ENCODE measurements at regions of chr15 and their contacts with region 1.

Region 1: GRCh38 chr15:67080900-67081431 is 15.6 kb downstream of the SMAD3 start:
- DNase-seq: peak; percentile 96
- ATAC-seq: peak; percentile 71
- H3K4me3 ChIP-seq: peak overlapping the region in 4 of 5 experiments; percentile 18 to 63 (median 30)
- H3K4me3 Mint-ChIP-seq: peak overlapping the region; percentile 87
- H3K27ac ChIP-seq: peak overlapping the region; percentile 92 to 97
- H3K27ac Mint-ChIP-seq: peak overlapping the region; percentile 97
- H3K4me1 ChIP-seq: peaks cover 96 to 100% of the 10 kb centered on the region in 2 donors
- H3K4me1 Mint-ChIP-seq: peaks cover 97% of the 10 kb centered on the region
- H3K27me3 ChIP-seq: no peaks in the 10 kb centered on the region
- H3K27me3 Mint-ChIP-seq: no peaks in the 10 kb centered on the region
- CTCF ChIP-seq: peak; percentile 61

Region 2: GRCh38 chr15:66862878-66863335 is 218.1 kb before region 1 on chr15:
- CTCF ChIA-PET with region 1: no interaction called
- POLR2A ChIA-PET with region 1: no interaction called
- intact Hi-C with region 1: loop called (anchors 10 kb)
- DNase-seq: peak; percentile 91
- ATAC-seq: peak; percentile 61
- H3K4me3 ChIP-seq: no peak overlapping the region
- H3K4me3 Mint-ChIP-seq: no peak overlapping the region
- H3K27ac ChIP-seq: peak overlapping the region; percentile 51 to 61
- H3K27ac Mint-ChIP-seq: peak overlapping the region; percentile 63
- H3K4me1 ChIP-seq: peaks cover 33 to 47% of the 10 kb centered on the region in 2 donors
- H3K4me1 Mint-ChIP-seq: peaks cover 49% of the 10 kb centered on the region
- H3K27me3 ChIP-seq: peaks cover 0 to 3% (median 0%) of the 10 kb centered on the region in 4 experiments
- H3K27me3 Mint-ChIP-seq: no peaks in the 10 kb centered on the region
- CTCF ChIP-seq: peak; percentile 89

Region 3: DNA sequence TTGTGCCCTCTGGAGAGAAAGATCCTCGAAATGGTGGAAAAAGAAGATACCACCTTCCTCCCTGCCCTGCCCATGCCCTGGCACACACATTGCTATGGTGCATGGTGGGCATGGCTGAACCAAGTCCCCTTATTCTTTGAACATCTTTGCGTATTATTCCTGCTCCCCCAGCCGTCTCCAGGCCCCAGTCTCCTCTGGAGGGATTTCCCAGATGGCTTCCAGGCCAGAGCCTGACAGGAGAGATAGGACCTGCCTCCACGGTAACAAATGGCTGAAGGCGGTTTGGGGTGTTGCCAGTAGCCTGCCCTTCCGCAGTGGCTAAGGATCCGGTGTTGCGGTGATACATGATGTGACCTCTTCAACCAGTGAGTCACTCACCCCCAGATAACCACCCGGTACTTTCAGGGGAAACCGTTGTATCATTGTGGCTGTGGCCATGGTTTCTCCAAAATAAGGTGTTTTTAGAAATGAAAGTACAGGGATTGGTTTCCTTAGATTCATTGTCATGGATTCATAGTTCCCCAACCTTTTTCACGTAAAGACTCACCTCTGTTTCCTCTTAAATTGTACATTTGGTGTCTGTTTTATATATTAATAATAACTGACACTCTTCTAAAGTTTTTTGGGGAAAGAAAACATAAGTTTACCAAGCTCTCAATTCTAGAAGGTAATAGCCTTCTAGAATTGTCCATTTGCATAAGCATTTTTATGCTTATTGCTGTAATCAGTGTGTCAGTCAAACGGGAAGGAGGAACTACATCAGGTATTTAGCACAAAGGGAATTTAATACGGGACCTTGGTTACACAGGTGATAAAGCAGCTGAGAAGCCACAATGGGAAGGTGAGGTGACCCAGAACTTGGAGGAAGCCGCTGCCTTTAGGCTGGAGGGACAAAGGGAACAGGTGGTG is 10.4 kb after region 1 on chr15:
- CTCF ChIA-PET with region 1: interaction called, 109 read pairs
- POLR2A ChIA-PET with region 1: interaction called, 13 read pairs
- intact Hi-C with region 1: loop called (anchors 1 kb)
- DNase-seq: peak; percentile 71
- ATAC-seq: peak; percentile 44
- H3K4me3 ChIP-seq: peak overlapping the region in 1 of 5 experiments; percentile 10
- H3K4me3 Mint-ChIP-seq: peak overlapping the region; percentile 79
- H3K27ac ChIP-seq: peak overlapping the region; percentile 88 to 90
- H3K27ac Mint-ChIP-seq: peak overlapping the region; percentile 97
- H3K4me1 ChIP-seq: peaks cover 97 to 98% of the 10 kb centered on the region in 2 donors
- H3K4me1 Mint-ChIP-seq: peaks cover 97% of the 10 kb centered on the region
- H3K27me3 ChIP-seq: no peaks in the 10 kb centered on the region
- H3K27me3 Mint-ChIP-seq: no peaks in the 10 kb centered on the region
- CTCF ChIP-seq: no peak

Region 4: GRCh38 chr15:67109141-67110034 is 28.4 kb after region 1 on chr15:
- CTCF ChIA-PET with region 1: interaction called, 109 read pairs
- POLR2A ChIA-PET with region 1: interaction called, 8 read pairs
- intact Hi-C with region 1: no loop called
- DNase-seq: peak; percentile 91
- ATAC-seq: peak; percentile 81
- H3K4me3 ChIP-seq: peak overlapping the region in 2 of 5 experiments; percentile 4 to 47
- H3K4me3 Mint-ChIP-seq: peak overlapping the region; percentile 76
- H3K27ac ChIP-seq: peak overlapping the region; percentile 88 to 98
- H3K27ac Mint-ChIP-seq: peak overlapping the region; percentile 94
- H3K4me1 ChIP-seq: peaks cover 81 to 84% of the 10 kb centered on the region in 2 donors
- H3K4me1 Mint-ChIP-seq: peaks cover 17% of the 10 kb centered on the region
- H3K27me3 ChIP-seq: no peaks in the 10 kb centered on the region
- H3K27me3 Mint-ChIP-seq: no peaks in the 10 kb centered on the region
- CTCF ChIP-seq: no peak

Region 5: DNA sequence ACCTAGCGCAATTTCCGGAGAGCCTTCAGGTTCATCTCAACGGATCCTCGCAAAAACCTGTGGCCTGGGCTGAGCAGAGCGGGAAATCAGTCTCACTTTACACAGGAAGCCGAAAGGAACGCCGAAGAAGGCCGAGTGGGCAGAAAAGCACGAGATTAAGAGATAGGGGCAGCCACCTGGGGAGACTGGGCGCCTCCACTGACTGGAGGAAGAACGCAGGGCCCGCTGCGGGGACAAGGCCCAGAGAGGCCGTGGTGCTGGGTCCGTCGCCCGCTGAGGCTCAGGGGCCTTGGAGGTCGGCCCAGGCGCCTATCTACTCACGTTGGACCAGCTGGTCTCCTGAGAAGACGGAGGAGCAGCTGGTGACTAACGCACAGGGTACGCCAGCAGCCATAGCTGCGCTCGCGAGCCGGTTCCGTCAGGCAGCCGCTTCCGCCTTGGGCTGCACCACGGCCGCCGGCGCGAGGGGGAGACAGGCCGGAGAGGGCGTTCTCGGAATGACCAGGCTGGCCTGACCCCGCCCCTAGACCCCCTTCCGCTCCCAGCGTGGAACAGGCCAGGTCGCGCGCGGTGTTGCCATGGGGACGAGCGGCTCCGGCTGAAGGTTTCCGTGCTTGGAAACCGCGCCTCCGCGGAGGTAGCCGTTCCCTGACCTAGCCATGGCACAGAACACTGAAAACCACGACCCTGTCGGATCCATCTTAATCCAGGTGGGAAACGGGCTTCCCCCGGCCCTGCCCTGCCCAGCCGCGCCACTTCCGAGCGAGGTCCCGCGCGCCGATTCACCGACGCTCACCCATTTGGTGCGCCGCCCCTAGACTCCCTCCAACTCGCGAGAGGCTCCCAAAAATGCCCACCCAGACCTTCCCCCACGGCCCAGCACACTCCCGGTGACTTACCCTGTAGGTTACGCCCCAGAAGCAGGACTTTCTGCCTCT is 173.5 kb after region 1 on chr15 and contains the starts of genes AAGAB and IQCH:
- CTCF ChIA-PET with region 1: interaction called, 4 read pairs
- POLR2A ChIA-PET with region 1: no interaction called
- intact Hi-C with region 1: loop called (anchors 5 kb)
- DNase-seq: peak; percentile 97
- ATAC-seq: peak; percentile 97
- H3K4me3 ChIP-seq: peak within 1 kb of the TSS; percentile 81 to 97 (median 92)
- H3K4me3 Mint-ChIP-seq: peak within 1 kb of the TSS; percentile 97
- H3K27ac ChIP-seq: peak within 1 kb of the TSS; percentile 72 to 84
- H3K27ac Mint-ChIP-seq: peak within 1 kb of the TSS; percentile 94
- H3K4me1 ChIP-seq: peaks cover 18 to 19% of the 10 kb centered on the region in 2 donors
- H3K4me1 Mint-ChIP-seq: peaks cover 30% of the 10 kb centered on the region
- H3K27me3 ChIP-seq: peaks cover 0 to 4% (median 0%) of the 10 kb centered on the region in 4 experiments
- H3K27me3 Mint-ChIP-seq: no peaks in the 10 kb centered on the region
- CTCF ChIP-seq: no peak
- total RNA-seq, gene AAGAB: 25.0 and 28.3 TPM in 2 replicates
- total RNA-seq, gene IQCH: 1.6 and 2.2 TPM in 2 replicates